Activated CD8-positive, alpha-beta memory T cell treated with anti-CD3 and anti-CD28 coated beads, Interleukin-2, amount 10 ng/mL, durations not matched to agents 7 days and 5 days (primary cell): ENCODE measurements at regions of chr9 and their contacts with region 1.

Region 1: DNA sequence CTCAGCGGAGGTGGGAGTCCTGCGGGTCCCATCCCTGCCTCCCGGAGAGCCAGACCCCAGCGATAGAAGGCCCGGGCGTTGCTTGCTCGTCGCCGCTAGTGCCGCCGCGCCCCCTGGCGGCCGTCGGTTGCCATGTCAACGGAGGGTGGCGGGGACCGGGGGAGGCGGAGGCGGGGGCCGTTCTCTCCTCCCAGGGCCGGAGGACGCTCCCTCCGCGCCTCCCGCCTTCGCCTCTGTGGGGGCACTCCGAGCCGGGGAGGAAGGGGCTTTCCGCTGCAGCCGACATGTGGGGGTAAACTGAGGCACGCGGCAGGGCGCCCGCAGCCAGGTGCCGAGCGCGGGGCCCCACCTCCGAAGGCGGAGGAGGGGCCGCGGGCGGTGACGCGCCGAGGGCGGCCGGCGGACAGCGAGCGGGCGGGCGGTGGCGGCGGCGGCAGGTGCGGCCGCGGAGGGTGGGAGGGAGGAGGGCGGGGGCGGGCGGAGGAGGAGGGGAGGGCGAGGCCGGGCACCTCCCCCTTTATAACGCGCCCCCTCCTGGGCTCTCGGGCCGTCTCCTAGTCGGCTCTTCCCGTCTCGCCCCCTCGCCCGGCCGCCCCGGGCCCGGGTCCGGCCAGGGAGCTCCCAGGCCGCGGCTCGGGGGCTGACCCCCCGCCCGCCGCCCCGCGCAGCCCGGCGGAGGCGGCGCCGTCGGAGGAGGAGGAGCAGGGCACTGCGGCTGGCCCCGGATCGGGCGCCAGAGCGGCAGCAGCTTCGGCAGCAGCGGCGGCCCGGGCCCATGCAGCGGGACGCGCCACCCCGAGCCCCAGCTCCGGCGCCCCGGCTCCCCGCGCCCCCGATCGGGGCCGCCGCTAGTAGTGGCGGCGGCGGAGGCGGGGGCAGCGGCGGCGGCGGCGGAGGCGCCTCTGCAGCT is 556 bp upstream of the CDK9 start:
- DNase-seq: peak; percentile 94
- ATAC-seq: peak; percentile 46
- H3K4me3 Mint-ChIP-seq: peak overlapping the region; percentile 95
- H3K27ac Mint-ChIP-seq: peak overlapping the region; percentile 89
- H3K4me1 Mint-ChIP-seq: peaks cover 78% of the 10 kb centered on the region
- H3K27me3 Mint-ChIP-seq: no peaks in the 10 kb centered on the region

Region 2: DNA sequence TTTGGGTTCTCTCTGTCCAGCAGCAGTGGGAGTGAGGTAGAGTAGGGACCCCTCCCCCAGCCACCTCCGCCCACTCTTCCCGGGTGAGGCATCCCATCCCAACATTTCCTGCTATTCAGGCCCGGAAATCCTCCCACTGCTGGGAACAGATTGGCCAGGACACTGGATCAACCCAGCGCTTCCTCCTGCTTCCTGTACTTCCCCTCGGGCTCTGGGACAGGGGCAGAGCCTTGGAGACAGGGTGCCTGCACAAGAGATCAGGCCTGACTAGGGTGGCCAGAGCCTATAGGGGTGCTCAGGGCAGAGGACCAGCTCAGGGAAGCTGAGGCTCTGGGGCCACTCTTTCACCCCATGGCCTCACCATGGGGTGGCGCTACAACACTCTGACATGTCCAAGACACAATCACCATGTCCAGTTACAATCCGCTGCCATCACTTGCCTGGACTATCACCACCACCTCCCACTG is 21.3 kb before region 1 on chr9:
- CTCF ChIA-PET with region 1: interaction called, 61 read pairs
- DNase-seq: no peak
- ATAC-seq: peak; percentile 45
- H3K4me3 Mint-ChIP-seq: no peak overlapping the region
- H3K27ac Mint-ChIP-seq: peak overlapping the region; percentile 54
- H3K4me1 Mint-ChIP-seq: peaks cover 48% of the 10 kb centered on the region
- H3K27me3 Mint-ChIP-seq: no peaks in the 10 kb centered on the region

Region 3: GRCh38 chr9:127770905-127771569 is 14.2 kb before region 1 on chr9:
- CTCF ChIA-PET with region 1: interaction called, 61 read pairs
- DNase-seq: peak; percentile 98
- ATAC-seq: peak; percentile 91
- H3K4me3 Mint-ChIP-seq: peak overlapping the region; percentile 85
- H3K27ac Mint-ChIP-seq: peak overlapping the region; percentile 88
- H3K4me1 Mint-ChIP-seq: peaks cover 79% of the 10 kb centered on the region
- H3K27me3 Mint-ChIP-seq: no peaks in the 10 kb centered on the region

Region 4: GRCh38 chr9:127903557-127904475 is 118.5 kb after region 1 on chr9:
- CTCF ChIA-PET with region 1: interaction called, 12 read pairs
- DNase-seq: peak; percentile 97
- ATAC-seq: peak; percentile 48
- H3K4me3 Mint-ChIP-seq: peak overlapping the region; percentile 83
- H3K27ac Mint-ChIP-seq: peak overlapping the region; percentile 100
- H3K4me1 Mint-ChIP-seq: peaks cover 54% of the 10 kb centered on the region
- H3K27me3 Mint-ChIP-seq: no peaks in the 10 kb centered on the region